ENCODE measurements at regions of chr3 and their contacts with region 1.

Region 1: GRCh38 chr3:98901392-98902350 is at the start of gene DCBLD2:
- H3K4me3 ChIP-seq: peak within 1 kb of the TSS; percentile 84
- H3K27ac ChIP-seq: peak within 1 kb of the TSS; percentile 72
- H3K4me1 ChIP-seq: no peaks in the 10 kb centered on the region
- CTCF ChIP-seq: no peak

Region 2: DNA sequence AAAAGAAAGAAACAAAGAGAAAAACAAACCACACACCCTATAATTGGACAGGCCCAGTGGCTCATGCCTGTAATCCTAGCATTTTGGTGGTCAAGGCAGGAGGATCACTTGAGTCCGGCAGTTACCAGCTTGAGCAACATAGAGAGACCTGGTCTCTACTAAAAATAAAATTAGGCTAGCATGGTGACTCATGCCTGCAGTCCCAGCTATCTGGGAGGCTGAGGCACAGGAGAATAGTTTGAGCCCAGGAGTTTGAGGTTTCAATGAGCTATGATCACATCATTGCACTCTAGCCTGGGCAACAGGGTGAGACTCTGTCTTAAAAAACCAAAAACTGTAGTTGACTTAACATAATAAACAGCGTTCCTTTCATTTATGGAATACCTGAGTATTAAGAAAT is 210.8 kb before region 1 on chr3:
- CTCF ChIA-PET with region 1: no interaction called
- POLR2A ChIA-PET with region 1: no interaction called
- H3K4me3 ChIP-seq: no peak overlapping the region
- H3K27ac ChIP-seq: no peak overlapping the region
- H3K4me1 ChIP-seq: no peaks in the 10 kb centered on the region
- CTCF ChIP-seq: no peak

Region 3: DNA sequence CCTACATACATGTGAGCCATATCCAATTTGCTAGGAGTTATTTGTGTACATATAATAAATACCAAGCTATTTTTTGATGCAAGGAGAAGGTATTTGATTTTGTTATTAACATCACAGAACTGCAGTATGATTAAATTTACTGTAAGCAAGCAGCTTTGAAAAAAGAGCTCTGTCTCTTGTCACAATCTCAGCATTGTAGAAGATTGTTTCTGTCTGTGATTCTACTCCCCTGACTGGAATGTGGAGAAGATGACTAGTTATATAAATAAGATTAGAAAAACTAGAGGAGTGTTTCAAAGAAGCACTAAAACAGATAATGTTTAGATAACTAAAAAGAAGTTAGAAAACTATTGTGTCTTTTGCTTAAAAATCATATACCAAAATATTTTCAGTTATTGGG is 16.9 kb after region 1 on chr3:
- CTCF ChIA-PET with region 1: no interaction called
- POLR2A ChIA-PET with region 1: interaction called, 10 read pairs
- H3K4me3 ChIP-seq: no peak overlapping the region
- H3K27ac ChIP-seq: no peak overlapping the region
- H3K4me1 ChIP-seq: no peaks in the 10 kb centered on the region
- CTCF ChIP-seq: no peak

Measured in HEK293 (cell line).